Activated B cell treated with CpG ODN at 0.5 μM for 24 hours (primary cell): ENCODE measurements at regions of chr1 and their contacts with region 1.

Region 1: DNA sequence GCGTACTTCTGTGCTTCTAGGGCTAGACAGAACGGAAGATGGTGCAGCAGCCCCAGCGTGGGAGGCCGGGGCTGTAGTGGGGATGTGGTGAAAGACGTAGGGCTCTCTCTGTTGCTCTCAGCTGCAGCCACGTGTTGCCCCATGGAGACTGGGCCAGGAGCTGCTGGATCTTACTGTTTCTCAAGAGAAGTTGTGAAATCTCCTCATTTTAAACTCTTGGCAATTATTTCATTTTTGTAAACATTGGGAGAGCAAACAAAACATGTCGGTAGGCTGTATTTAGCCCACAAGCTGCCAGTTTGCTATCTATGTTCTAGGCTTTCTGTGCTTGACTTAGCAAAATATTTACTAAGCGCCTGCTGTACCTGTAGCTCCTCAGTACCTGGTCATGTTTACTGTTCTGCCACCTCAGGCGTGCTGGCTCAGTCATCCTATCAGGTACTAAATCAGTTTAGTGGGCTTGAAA is 15.9 kb upstream of the ELOA start:
- DNase-seq: no peak
- ATAC-seq: no peak
- H3K4me3 Mint-ChIP-seq: peak overlapping the region; percentile 70
- H3K27ac Mint-ChIP-seq: peak overlapping the region; percentile 89
- H3K4me1 Mint-ChIP-seq: peaks cover 73% of the 10 kb centered on the region
- H3K27me3 Mint-ChIP-seq: no peaks in the 10 kb centered on the region
- CTCF ChIP-seq: no peak

Region 2: DNA sequence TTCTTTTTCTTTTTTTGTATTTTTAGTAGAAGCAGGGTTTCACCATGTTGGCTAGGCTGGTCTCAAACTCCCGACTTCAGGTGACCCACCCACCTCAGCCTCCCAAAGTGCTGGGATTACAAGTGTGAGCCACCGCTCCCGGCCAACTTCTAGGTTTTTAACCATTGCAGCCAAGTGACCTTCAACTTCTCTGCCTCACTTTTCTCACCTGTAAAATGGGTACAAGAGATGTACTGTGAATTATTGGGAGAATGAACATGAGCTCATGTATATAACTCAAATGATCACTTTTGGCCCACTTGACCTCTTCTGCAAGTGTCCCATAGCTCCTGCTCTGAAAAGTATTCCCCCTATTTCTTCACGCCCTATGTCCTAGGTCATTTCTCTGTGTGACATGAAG is 47.6 kb before region 1 on chr1:
- CTCF ChIA-PET with region 1: no interaction called
- POLR2A ChIA-PET with region 1: no interaction called
- intact Hi-C with region 1: no loop called
- DNase-seq: no peak
- ATAC-seq: no peak
- H3K4me3 Mint-ChIP-seq: no peak overlapping the region
- H3K27ac Mint-ChIP-seq: no peak overlapping the region
- H3K4me1 Mint-ChIP-seq: no peaks in the 10 kb centered on the region
- H3K27me3 Mint-ChIP-seq: peaks cover 8% of the 10 kb centered on the region
- CTCF ChIP-seq: no peak

Region 3: GRCh38 chr1:23743287-23744052 is 16.1 kb after region 1 on chr1 and contains the start of gene ELOA:
- CTCF ChIA-PET with region 1: interaction called, 3 read pairs
- POLR2A ChIA-PET with region 1: interaction called, 145 read pairs
- intact Hi-C with region 1: loop called (anchors 1 kb)
- DNase-seq: peak; percentile 76
- ATAC-seq: peak; percentile 91
- H3K4me3 Mint-ChIP-seq: peak within 1 kb of the TSS; percentile 90
- H3K27ac Mint-ChIP-seq: peak within 1 kb of the TSS; percentile 89
- H3K4me1 Mint-ChIP-seq: peaks cover 52% of the 10 kb centered on the region
- H3K27me3 Mint-ChIP-seq: no peaks in the 10 kb centered on the region
- CTCF ChIP-seq: no peak
- total RNA-seq, gene ELOA: 70.2 and 72.6 TPM in 2 replicates